ENCODE measurements at regions of chr1 and their contacts with region 1.

Region 1: GRCh38 chr1:48654606-48655210 is 122.0 kb downstream of the BEND5 start:
- DNase-seq: no peak
- H3K4me3 ChIP-seq: no peak overlapping the region
- CTCF ChIP-seq: no peak
- POLR2A ChIP-seq: no peak

Region 2: GRCh38 chr1:48552420-48552819 is 102.3 kb before region 1 on chr1:
- intact Hi-C with region 1: no loop called
- DNase-seq: no peak
- H3K4me3 ChIP-seq: no peak overlapping the region
- CTCF ChIP-seq: no peak
- POLR2A ChIP-seq: no peak

Region 3: DNA sequence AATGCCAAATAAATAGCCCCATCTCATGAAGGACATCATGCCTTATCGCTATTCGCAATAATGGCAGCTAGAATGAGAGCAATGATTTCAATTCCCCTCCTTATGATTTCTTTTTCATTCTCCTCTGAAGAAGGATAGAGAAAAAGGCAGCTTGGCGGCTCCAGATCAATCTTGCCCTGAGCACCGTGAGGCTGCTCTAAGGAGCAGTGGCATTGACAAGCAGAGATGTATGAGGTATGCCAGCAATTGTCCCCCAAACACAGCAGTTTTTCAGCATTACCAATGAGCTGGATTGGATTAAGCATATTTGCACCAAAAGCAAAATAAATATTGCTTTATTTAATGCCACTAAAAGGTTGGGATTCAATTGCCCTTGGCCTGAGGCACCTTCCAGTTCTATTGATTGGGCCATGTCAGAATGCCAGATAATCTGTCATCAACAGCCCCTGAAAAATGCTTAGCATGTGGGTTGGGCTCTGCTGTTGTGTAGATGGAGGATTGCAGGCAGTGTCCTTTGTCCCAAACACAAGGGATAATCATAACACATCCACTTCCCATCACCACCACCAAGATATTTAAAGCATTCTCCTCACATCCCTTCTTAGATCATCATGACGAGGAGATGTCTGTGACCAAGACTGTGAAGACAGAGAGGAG is 13.7 kb before region 1 on chr1:
- intact Hi-C with region 1: loop called (anchors 1 kb)
- DNase-seq: no peak
- H3K4me3 ChIP-seq: no peak overlapping the region
- CTCF ChIP-seq: no peak
- POLR2A ChIP-seq: no peak

Region 4: DNA sequence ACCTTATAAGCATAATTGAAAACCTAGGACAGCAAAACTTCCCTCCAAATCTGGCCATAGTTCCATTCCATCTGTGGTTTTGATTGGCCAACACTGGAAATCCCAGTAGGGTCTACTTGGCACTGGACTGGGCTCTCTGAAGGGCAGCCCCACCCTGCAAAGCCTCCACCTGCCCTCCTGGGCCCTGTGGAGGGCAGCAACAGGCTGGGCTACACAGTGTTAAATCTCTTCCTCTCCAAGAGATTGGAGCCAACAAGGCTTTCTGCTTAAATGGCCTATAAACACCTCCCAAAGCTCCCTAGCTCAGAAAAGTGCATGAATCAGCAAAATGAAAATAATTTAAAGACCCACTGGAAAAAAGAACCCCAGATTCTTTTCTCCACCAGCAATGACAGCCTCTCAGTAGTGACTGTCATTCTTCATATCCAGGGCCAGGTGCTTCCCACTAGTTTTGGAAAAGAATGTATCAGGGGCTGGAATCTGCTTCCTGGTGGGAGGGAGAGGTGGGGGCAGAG is 63.5 kb after region 1 on chr1:
- intact Hi-C with region 1: no loop called
- DNase-seq: no peak
- H3K4me3 ChIP-seq: no peak overlapping the region
- CTCF ChIP-seq: no peak
- POLR2A ChIP-seq: no peak

Region 5: GRCh38 chr1:48851638-48852037 is 196.9 kb after region 1 on chr1:
- intact Hi-C with region 1: no loop called
- DNase-seq: no peak
- H3K4me3 ChIP-seq: no peak overlapping the region
- CTCF ChIP-seq: no peak
- POLR2A ChIP-seq: no peak